MCF 10A (cell line): ENCODE measurements at regions of chr5 and their contacts with region 1.

Region 1: DNA sequence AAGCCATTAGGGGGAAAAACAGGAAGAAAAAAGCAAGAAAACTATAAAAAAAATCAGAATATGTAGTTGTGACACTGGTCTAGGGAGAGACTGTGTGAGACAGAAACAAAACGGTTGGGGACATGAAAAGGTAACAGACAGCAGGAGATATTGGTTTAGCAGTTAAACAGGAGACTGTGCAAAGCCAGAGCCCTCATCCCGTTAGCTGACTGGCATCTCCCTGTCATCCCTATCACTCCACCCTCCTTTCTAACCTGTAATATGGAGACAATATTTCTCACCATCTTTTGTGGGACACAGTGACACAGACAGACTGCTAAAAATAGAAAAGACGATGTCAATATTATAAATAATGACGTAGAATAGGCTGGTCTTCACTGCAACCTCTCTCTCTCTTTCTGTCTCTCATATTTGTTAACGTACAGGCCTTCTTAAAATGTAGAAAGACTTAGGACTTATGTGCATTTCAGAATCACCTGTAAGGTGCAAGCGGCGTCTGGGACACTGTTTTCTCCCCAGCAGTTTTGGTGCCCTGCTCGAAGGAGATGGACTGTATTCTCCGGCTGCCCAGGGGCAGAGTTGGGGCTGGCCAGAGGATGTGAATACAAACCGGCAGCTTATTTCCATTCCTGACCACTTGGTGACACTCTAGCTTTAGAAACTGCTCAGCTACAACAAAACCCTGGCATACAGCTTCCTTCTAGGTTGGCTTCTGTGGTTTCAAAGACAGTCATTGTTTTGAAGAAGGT is 190.6 kb downstream of the MAT2B start:
- DNase-seq: peak; percentile 90
- H3K4me3 Mint-ChIP-seq: no peak overlapping the region
- H3K27ac Mint-ChIP-seq: no peak overlapping the region
- H3K4me1 Mint-ChIP-seq: peaks cover 8% of the 10 kb centered on the region
- H3K27me3 Mint-ChIP-seq: no peaks in the 10 kb centered on the region
- CTCF ChIP-seq: peak; percentile 98

Region 2: GRCh38 chr5:163033646-163034045 is 662.4 kb before region 1 on chr5:
- CTCF ChIA-PET with region 1: no interaction called
- POLR2A ChIA-PET with region 1: no interaction called
- intact Hi-C with region 1: no loop called
- DNase-seq: no peak
- H3K4me3 Mint-ChIP-seq: no peak overlapping the region
- H3K27ac Mint-ChIP-seq: no peak overlapping the region
- H3K4me1 Mint-ChIP-seq: no peaks in the 10 kb centered on the region
- H3K27me3 Mint-ChIP-seq: no peaks in the 10 kb centered on the region
- CTCF ChIP-seq: no peak

Region 3: GRCh38 chr5:163571728-163572127 is 124.3 kb before region 1 on chr5:
- CTCF ChIA-PET with region 1: interaction called, 86 read pairs
- POLR2A ChIA-PET with region 1: interaction called, 3 read pairs
- intact Hi-C with region 1: loop called (anchors 1 kb)
- DNase-seq: peak; percentile 99
- H3K4me3 Mint-ChIP-seq: no peak overlapping the region
- H3K27ac Mint-ChIP-seq: peak overlapping the region; percentile 74
- H3K4me1 Mint-ChIP-seq: peaks cover 56% of the 10 kb centered on the region
- H3K27me3 Mint-ChIP-seq: no peaks in the 10 kb centered on the region
- CTCF ChIP-seq: no peak

Region 4: DNA sequence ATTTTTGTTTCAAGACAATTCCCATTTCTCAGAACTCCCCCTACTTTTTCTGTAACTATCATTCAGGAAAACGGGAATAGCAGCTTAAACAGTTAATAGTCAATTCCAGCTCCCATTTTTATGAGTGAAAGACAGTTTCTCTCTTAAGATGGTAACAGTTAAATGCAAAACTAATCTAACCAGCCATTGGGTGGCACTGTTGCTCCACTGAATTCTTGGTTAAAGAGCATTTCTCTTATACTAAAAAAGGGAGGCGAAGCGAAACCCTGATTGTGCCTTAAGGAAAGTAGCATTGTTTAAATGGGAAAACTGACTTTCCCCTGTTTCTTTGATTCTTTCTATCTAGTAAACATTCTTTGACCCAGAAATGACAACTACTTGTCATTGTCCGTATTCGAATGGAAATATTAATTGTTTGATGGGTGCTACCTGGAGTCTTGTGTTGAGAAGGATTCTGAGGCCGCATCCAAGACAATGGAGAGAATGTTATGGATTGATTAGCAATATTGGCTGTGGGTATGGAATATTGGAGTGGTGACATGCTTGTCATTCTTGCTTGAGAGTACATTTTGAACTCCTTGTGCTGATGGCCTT is 317.2 kb after region 1 on chr5:
- CTCF ChIA-PET with region 1: interaction called, 25 read pairs
- POLR2A ChIA-PET with region 1: interaction called, 7 read pairs
- intact Hi-C with region 1: loop called (anchors 1 kb)
- DNase-seq: peak; percentile 91
- H3K4me3 Mint-ChIP-seq: no peak overlapping the region
- H3K27ac Mint-ChIP-seq: no peak overlapping the region
- H3K4me1 Mint-ChIP-seq: no peaks in the 10 kb centered on the region
- H3K27me3 Mint-ChIP-seq: no peaks in the 10 kb centered on the region
- CTCF ChIP-seq: peak; percentile 80

Region 5: DNA sequence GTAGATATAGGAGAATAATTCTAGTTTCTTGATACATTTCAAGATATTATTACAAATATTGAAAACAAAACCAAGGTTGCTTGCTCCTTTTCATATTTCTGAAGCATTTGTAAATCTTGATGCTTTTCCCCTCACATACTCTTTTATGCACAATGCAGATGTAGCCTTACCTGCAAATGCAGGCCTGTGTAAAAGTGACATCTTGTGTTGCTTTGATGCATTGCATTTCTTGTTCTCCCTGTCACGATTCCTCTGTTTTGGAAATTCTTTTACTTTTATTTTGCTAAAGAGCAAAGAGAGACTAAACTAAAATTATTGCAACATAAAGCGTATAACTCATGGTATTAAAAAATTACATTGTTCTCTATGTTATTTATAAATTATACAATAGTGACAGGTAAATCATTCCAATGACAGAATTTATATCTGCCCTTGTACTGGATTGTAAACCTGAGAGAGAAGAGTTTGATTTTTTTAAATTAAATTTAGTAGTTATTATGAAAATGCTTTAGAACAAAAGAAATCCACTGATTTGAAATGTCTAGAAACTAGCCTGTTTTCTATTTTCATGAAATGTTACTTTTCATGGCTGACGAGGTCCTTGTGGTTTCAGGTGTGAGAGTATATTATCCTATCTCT is 779.5 kb after region 1 on chr5:
- CTCF ChIA-PET with region 1: interaction called, 60 read pairs
- POLR2A ChIA-PET with region 1: interaction called, 3 read pairs
- intact Hi-C with region 1: loop called (anchors 1 kb)
- DNase-seq: peak; percentile 70
- H3K4me3 Mint-ChIP-seq: no peak overlapping the region
- H3K27ac Mint-ChIP-seq: no peak overlapping the region
- H3K4me1 Mint-ChIP-seq: no peaks in the 10 kb centered on the region
- H3K27me3 Mint-ChIP-seq: no peaks in the 10 kb centered on the region
- CTCF ChIP-seq: peak; percentile 97

Region 6: DNA sequence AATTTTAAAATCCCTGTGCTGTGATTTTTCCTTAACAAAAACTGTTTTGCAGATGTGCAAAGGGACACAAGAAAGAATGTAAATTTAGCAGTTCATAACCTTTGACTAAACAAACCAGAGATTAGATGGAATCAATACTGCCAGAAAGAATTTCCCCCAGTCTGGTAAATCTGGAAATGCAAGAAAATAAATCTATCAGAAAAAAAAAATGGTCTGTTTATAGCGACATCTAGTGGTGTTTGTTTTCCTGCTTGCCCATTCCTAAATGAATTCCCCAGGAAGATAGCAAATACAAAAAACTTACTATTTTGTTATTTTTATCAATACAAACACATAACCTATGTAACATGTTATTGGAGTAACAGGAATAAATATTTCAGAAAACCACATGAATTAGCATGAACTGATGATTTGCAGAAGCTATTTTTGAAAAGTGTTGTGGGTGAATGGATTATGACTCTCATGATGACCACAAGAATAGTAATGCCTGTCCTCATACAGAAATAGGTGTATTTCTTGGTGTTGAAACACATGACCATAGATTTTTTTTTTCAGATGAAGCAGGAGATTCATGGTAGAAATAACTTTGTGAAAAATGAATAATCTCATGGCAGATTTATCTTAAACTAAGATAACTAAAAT is 1513.2 kb after region 1 on chr5:
- CTCF ChIA-PET with region 1: interaction called, 6 read pairs
- POLR2A ChIA-PET with region 1: no interaction called
- intact Hi-C with region 1: loop called (anchors 2 kb)
- DNase-seq: peak; percentile 55
- H3K4me3 Mint-ChIP-seq: no peak overlapping the region
- H3K27ac Mint-ChIP-seq: no peak overlapping the region
- H3K4me1 Mint-ChIP-seq: no peaks in the 10 kb centered on the region
- H3K27me3 Mint-ChIP-seq: no peaks in the 10 kb centered on the region
- CTCF ChIP-seq: peak; percentile 66